Mammary epithelial cell (primary cell): ENCODE measurements at regions of chr13 and their contacts with region 1.

Region 1: GRCh38 chr13:109786457-109787134 is at the start of gene IRS2:
- DNase-seq: peak; percentile 90
- H3K4me3 ChIP-seq: peak within 1 kb of the TSS; percentile 81
- H3K27ac ChIP-seq: peak within 1 kb of the TSS; percentile 78
- H3K4me1 ChIP-seq: peaks cover 41% of the 10 kb centered on the region
- H3K27me3 ChIP-seq: no peaks in the 10 kb centered on the region
- CTCF ChIP-seq: no peak
- total RNA-seq, gene IRS2: 22.7 to 37.8 TPM

Region 2: DNA sequence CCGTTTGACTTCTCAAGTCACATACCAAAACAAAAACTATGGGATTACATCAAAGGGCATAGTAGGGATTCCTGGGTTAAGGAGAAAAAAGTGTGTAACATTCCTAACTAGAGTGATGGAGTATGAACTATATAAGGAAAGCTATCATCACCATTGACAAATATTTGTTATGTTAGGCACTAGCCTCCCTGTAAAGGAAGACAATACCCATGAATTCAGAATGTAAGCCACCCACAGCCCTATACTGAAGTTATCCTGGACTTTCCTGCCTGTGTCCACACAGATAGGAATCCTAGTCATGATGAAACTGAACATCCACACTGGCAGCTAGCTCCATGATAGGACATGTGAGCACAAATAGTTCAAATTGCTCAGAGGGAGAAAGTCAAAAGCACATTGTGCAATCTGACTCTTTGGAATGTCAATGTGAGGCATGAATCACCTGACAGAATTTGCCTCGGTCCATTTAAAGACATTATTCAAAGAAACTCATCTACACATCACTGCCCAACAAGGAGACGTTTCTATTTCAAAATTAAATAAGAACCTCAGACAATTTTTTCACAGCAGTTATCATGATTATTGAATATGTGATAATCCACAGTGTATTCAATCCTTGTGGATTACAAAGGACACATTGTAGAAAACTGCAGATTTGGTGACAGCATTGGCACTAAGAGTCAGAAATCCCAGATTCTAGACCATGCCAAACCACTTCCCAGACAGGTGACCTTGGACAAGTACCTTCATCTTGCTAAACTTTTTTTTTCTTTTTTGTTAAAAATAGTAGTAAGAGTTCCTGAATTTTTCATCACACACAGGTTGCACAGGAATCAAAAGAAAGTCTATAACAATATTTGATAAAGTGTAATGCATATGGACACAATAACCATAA is 529.5 kb before region 1 on chr13:
- CTCF ChIA-PET with region 1: no interaction called
- dilution Hi-C with region 1: no loop called
- in situ Hi-C with region 1: loop called in 1 of 2 experiments (anchors 25 kb)
- intact Hi-C with region 1: loop called (anchors 5 kb)
- DNase-seq: peak; percentile 100
- H3K4me3 ChIP-seq: no peak overlapping the region
- H3K27ac ChIP-seq: peak overlapping the region; percentile 99
- H3K4me1 ChIP-seq: peaks cover 57% of the 10 kb centered on the region
- H3K27me3 ChIP-seq: no peaks in the 10 kb centered on the region
- CTCF ChIP-seq: no peak

Region 3: GRCh38 chr13:109436055-109436622 is 350.5 kb before region 1 on chr13:
- CTCF ChIA-PET with region 1: no interaction called
- dilution Hi-C with region 1: no loop called
- in situ Hi-C with region 1: no loop called
- intact Hi-C with region 1: loop called (anchors 2 kb)
- DNase-seq: peak; percentile 98
- H3K4me3 ChIP-seq: peak overlapping the region in 1 of 3 experiments; percentile 7
- H3K27ac ChIP-seq: peak overlapping the region; percentile 65
- H3K4me1 ChIP-seq: peaks cover 26% of the 10 kb centered on the region
- H3K27me3 ChIP-seq: no peaks in the 10 kb centered on the region
- CTCF ChIP-seq: no peak

Region 4: DNA sequence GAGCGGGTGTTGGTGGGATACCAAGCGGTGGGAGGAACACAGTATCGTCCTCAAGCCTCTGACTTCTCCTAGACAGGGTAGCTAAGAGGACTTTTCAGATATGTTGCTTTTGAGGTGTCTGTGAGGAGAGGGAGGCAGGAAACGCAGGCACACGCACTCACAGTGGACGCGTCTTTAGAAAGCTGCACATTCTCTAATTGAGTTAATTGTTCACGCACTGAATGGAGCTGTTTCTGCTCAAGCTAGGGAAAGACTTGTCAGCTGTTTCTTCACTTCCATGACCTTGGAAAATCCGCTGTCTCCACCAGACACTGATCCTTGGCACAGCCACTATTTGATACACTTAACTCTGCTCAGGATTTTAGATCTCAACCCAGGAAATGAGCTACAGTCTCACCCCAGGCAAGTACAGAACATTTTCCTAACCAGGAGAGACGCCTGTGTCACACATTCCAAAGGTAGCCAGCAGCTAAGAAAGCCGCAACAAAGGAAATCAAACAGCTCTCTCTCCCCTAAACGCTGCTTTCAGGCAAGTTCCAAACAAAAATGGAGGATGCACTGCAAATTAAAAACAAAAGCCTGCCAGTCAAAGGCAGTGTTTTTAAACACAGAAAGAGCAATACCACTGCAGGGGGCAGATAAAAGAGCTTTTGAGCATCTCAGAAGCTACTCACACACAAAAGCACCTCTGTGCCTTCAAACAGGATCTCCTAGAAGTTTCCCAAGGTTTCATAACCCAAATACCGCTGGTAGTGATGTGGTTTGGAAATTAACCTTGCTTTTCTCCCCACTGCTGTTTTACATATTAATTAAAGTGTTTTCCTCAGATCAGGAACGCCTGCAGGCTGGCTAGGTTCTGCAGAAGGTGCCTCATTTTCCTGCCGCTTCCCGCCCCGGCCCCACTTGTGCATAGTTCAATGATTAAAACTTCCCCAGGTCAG is 57.5 kb before region 1 on chr13:
- CTCF ChIA-PET with region 1: no interaction called
- dilution Hi-C with region 1: no loop called
- in situ Hi-C with region 1: no loop called
- intact Hi-C with region 1: no loop called
- DNase-seq: peak; percentile 63
- H3K4me3 ChIP-seq: no peak overlapping the region
- H3K27ac ChIP-seq: no peak overlapping the region
- H3K4me1 ChIP-seq: peaks cover 13% of the 10 kb centered on the region
- H3K27me3 ChIP-seq: no peaks in the 10 kb centered on the region
- CTCF ChIP-seq: no peak

Region 5: DNA sequence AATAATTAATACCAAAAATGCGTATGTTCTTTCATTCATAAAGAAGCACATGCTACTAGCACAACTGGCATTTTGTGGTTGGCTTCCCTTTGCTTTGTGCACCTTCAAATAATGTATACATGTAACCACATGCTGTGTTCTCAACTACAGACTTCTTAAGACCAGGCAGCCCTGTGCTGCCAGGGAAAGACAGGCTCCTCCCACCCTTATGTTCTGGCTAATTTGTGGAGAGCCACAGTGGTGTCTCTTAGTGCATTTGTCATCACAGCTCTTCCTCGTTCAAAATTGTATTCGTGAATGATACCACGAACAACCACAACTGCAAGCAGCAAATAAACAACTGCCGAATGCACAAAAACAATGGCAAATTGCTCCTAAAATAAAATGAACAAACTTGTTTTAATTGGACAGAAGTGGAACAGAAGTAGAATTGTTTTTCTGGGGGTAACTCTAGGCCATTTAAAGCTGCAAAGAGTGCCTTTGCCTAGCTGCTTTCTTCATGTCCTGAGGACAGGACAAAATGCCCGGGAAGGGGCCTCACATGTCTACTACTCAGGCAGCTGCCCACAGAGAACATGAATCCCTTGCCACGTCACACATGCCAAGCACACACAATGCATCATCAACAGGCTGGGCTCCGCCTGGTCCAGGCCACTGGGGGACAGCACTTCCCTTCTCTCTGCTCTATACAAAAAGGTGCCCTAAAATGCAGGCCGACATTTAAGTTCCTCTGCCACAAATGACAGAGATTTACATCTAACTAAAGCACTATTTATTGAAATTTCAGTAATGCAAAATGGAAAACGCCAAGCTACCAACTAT is 21.9 kb before region 1 on chr13:
- CTCF ChIA-PET with region 1: no interaction called
- dilution Hi-C with region 1: no loop called
- in situ Hi-C with region 1: no loop called
- intact Hi-C with region 1: no loop called
- DNase-seq: peak; percentile 59
- H3K4me3 ChIP-seq: no peak overlapping the region
- H3K27ac ChIP-seq: no peak overlapping the region
- H3K4me1 ChIP-seq: peaks cover 45% of the 10 kb centered on the region
- H3K27me3 ChIP-seq: no peaks in the 10 kb centered on the region
- CTCF ChIP-seq: peak; percentile 25 to 37

Region 6: DNA sequence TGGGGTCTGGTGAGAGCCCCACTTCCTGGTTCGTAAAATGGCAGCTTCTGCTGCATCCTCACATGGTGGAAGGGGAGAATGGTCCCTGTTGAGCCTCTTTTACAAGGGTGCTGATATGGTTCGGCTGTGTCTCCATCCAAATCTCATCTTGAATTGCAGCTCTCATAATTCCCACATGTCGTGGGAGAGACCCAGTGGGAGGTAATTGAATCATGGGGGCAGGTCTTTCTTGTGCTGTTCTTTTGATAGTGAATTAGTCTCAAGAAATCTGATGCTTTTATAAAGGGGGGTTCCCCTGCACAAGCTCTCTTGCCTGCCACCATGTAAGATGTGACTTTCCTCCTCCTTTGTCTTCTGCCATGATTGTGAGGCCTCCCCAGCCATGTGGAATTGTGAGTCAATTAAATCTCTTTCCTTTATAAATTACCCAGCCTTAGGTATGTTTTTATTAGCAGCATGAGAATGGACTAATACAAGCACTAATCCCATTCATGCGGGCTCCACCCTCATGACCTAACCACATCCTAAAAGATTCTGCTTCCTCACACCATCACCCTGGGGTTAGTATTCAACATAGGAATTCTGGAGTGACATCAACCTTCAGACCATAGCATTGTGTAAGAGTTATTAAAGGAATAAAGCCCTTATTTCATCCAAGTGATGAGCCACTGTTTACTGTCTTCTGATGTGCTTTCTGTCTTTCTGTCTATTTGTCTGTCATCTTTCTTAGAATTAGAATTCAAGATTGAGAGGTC is 158.8 kb after region 1 on chr13:
- CTCF ChIA-PET with region 1: no interaction called
- dilution Hi-C with region 1: no loop called
- in situ Hi-C with region 1: no loop called
- intact Hi-C with region 1: loop called (anchors 5 kb)
- DNase-seq: peak; percentile 96
- H3K4me3 ChIP-seq: no peak overlapping the region
- H3K27ac ChIP-seq: peak overlapping the region; percentile 74
- H3K4me1 ChIP-seq: peaks cover 11% of the 10 kb centered on the region
- H3K27me3 ChIP-seq: no peaks in the 10 kb centered on the region
- CTCF ChIP-seq: no peak

Region 7: DNA sequence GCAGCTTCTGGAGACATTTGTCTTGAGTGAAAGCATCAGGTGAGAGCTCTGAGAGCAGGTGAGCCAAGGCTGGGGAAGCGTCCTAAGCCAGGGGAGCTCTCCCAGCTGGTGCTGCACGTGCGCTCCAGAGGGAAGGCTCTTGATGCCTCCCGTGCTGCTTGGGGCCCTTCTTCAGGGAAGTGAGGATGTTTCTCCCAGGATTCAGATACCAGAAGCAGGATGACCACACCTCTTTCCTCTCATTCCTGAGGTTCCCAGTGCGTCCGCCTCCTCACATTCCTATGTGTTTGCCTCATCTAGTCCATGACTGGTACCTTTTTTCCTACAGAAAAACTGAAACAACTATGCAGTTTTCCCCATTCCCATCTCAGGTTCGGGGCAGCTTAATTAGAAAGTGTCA is 230.8 kb after region 1 on chr13:
- CTCF ChIA-PET with region 1: no interaction called
- dilution Hi-C with region 1: no loop called
- in situ Hi-C with region 1: loop called in 1 of 2 experiments (anchors 10 kb)
- intact Hi-C with region 1: no loop called
- DNase-seq: peak; percentile 86
- H3K4me3 ChIP-seq: no peak overlapping the region
- H3K27ac ChIP-seq: peak overlapping the region; percentile 95
- H3K4me1 ChIP-seq: peaks cover 46% of the 10 kb centered on the region
- H3K27me3 ChIP-seq: no peaks in the 10 kb centered on the region
- CTCF ChIP-seq: no peak